ENCODE measurements at regions of chr12 and their contacts with region 1.

Region 1: GRCh38 chr12:95918194-95918993 is 24.0 kb downstream of the CCDC38 start:
- DNase-seq: peak; percentile 84
- H3K4me3 Mint-ChIP-seq: no peak overlapping the region
- H3K27ac Mint-ChIP-seq: no peak overlapping the region
- H3K4me1 Mint-ChIP-seq: no peaks in the 10 kb centered on the region
- H3K27me3 Mint-ChIP-seq: peaks cover 18% of the 10 kb centered on the region

Region 2: DNA sequence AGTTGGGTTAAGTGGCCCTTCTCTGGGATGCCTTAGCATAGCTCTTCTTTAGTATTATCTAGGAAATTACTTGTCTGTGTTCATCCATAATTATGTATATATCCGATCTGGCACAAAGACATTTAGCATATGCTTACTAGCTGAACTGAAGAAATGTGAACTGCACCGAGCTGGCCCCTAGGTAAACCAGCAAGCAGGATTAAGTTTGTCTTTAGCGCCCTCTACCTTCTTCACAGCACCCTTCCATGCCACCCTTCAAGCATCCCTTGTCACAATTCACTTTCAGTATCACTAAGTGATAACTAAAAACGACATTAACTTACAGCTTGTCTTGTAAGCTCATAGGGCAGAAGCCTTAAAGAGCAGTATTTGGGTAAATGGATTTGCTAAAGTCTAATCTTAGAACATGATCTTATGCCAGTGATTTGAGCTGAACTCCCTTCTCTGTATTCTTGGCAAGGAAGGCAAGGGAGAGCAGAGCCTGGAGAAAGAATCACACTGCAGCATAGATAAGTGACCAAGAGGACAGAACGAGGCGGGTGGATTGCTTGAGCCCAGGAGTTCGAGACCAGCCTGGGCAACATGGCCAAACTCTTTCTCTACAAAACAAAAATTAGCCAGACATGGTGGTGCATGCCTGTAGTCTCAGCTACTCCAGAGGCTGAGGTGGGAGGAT is 80.4 kb after region 1 on chr12:
- intact Hi-C with region 1: loop called (anchors 1 kb)
- DNase-seq: peak; percentile 86
- H3K4me3 Mint-ChIP-seq: no peak overlapping the region
- H3K27ac Mint-ChIP-seq: peak overlapping the region; percentile 7
- H3K4me1 Mint-ChIP-seq: peaks cover 9% of the 10 kb centered on the region
- H3K27me3 Mint-ChIP-seq: no peaks in the 10 kb centered on the region

Measured in activated CD4-positive, alpha-beta T cell treated with anti-CD3 and anti-CD28 coated beads, Interleukin-2, amount 10 ng/mL, durations not matched to agents 24 days and 14 days (primary cell).